ENCODE measurements at regions of chr12 and their contacts with region 1.

Region 1: GRCh38 chr12:94644141-94644979 is 6.0 kb downstream of the TMCC3 start:
- DNase-seq: no peak
- H3K4me3 Mint-ChIP-seq: no peak overlapping the region
- H3K27ac Mint-ChIP-seq: no peak overlapping the region
- H3K4me1 Mint-ChIP-seq: peaks cover 44% of the 10 kb centered on the region
- H3K27me3 Mint-ChIP-seq: peaks cover 74% of the 10 kb centered on the region

Region 2: DNA sequence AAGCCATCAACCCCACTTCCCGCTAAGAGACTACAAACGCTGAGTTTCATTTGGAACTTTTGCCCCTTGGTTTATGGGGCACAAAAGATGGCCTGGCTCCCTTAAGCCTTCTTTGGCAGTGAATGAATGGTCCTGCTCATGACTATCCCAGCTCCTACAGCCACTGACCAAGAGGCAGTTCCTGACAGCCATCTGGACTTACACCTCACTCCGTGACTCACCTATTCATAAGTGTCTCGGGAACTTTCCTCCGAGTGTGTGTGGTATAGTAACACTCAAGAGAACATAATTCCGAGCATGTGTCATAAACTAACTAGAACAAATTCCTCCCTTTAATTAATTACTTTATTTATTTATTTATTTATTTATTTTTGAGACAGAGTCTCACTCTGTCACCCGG is 1318.5 kb before region 1 on chr12:
- intact Hi-C with region 1: no loop called
- DNase-seq: no peak
- H3K4me3 Mint-ChIP-seq: no peak overlapping the region
- H3K27ac Mint-ChIP-seq: no peak overlapping the region
- H3K4me1 Mint-ChIP-seq: peaks cover 3% of the 10 kb centered on the region
- H3K27me3 Mint-ChIP-seq: no peaks in the 10 kb centered on the region

Region 3: GRCh38 chr12:94532490-94533422 is 111.6 kb before region 1 on chr12:
- intact Hi-C with region 1: no loop called
- DNase-seq: peak; percentile 55
- H3K4me3 Mint-ChIP-seq: no peak overlapping the region
- H3K27ac Mint-ChIP-seq: no peak overlapping the region
- H3K4me1 Mint-ChIP-seq: peaks cover 8% of the 10 kb centered on the region
- H3K27me3 Mint-ChIP-seq: peaks cover 9% of the 10 kb centered on the region

Region 4: GRCh38 chr12:94586589-94587259 is 57.6 kb before region 1 on chr12:
- intact Hi-C with region 1: no loop called
- DNase-seq: no peak
- H3K4me3 Mint-ChIP-seq: no peak overlapping the region
- H3K27ac Mint-ChIP-seq: no peak overlapping the region
- H3K4me1 Mint-ChIP-seq: no peaks in the 10 kb centered on the region
- H3K27me3 Mint-ChIP-seq: no peaks in the 10 kb centered on the region

Region 5: DNA sequence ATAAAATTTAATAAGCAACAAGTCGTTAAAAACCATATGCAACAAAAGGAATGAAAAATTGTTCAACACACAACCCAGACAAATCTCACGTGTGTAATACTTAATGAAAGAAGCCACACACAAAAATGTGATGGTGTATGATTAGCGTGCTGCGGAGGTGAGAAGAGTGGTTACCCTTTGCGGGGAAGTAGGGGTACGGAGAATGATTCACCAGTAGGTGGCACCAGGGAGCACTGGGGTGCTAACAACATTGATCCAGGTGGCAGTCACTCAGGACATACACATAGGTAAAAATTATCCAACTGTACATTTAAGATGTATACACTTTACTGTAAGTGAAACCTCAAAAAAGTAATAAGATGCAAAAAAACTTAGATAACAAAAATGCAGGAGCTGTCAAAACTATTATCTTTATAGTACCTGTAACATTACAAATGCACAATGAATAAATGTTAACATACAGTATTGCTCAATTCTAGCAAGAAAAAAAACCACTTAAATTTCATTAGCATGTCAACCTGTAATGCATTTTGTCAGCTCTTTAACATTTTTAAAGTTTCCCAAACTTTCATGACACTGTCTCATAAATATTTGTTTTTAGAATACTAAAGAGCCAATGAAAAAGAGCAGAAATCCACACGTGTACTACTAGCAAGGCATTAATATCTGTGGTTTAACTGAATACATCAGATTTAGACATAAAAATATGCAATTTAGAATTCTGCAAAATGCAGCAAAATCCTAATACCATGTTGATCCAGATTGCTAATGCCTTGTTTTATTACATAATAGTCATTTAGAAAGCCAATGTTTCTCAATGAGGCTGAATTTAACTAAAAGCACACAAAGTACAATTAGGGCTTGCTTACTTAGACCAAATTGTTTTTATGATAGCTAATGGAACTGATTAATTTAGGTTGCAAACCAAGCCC is 40.7 kb before region 1 on chr12:
- intact Hi-C with region 1: loop called (anchors 5 kb)
- DNase-seq: peak; percentile 24
- H3K4me3 Mint-ChIP-seq: no peak overlapping the region
- H3K27ac Mint-ChIP-seq: no peak overlapping the region
- H3K4me1 Mint-ChIP-seq: no peaks in the 10 kb centered on the region
- H3K27me3 Mint-ChIP-seq: peaks cover 39% of the 10 kb centered on the region

Region 6: DNA sequence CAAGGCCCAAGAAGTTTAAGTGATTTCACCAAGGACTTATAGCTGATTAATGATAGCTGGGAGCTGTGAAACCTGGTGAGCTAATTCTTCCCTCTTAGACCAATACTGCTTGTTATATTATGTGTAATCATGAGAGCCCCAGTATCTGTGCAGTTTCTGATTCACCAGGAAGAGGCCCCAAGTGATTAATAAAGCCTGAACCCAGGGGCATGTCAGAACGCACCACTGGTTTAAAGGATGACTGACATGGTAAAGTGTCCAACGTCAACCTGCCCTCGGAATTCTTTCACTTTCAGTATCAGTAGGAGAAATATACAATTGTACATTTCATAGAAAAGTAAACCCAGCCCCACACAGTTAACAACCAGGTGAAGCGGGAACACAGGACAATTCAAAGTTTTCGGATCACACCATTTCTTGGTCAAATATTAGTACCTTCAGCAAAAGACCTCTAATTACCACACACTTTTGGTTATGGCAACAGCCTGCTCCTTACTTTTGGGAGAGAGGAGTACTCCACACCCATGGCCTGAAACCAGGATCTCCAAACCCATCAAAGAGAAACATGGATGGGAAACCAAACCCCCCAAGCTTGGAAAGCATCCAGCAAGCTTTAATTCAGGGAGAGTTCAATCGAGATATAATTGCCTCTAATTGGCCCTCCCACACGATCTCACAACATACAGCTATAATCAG is 22.5 kb before region 1 on chr12:
- intact Hi-C with region 1: loop called (anchors 1 kb)
- DNase-seq: peak; percentile 37
- H3K4me3 Mint-ChIP-seq: peak overlapping the region; percentile 9
- H3K27ac Mint-ChIP-seq: peak overlapping the region; percentile 6
- H3K4me1 Mint-ChIP-seq: peaks cover 16% of the 10 kb centered on the region
- H3K27me3 Mint-ChIP-seq: no peaks in the 10 kb centered on the region

Region 7: GRCh38 chr12:95003213-95003920 is 359.0 kb after region 1 on chr12 and contains the start of gene NDUFA12:
- intact Hi-C with region 1: loop called (anchors 5 kb)
- DNase-seq: peak; percentile 92
- H3K4me3 Mint-ChIP-seq: peak within 1 kb of the TSS; percentile 90
- H3K27ac Mint-ChIP-seq: peak within 1 kb of the TSS; percentile 84
- H3K4me1 Mint-ChIP-seq: peaks cover 27% of the 10 kb centered on the region
- H3K27me3 Mint-ChIP-seq: no peaks in the 10 kb centered on the region
- total RNA-seq, gene NDUFA12: 117 and 118 TPM in 2 replicates

Measured in activated T-helper 2 cell treated with anti-CD3 and anti-CD28 coated beads, Interferon-gamma antibody, Interleukin-2, Interleukin-4, amounts not matched to agents 10 μg/mL and 5 μg/mL and 100 μg/mL, durations not matched to agents 14 hours and 24 hours and 36 hours (primary cell).